ENCODE measurements at regions of chr16 and their contacts with region 1.

Region 1: DNA sequence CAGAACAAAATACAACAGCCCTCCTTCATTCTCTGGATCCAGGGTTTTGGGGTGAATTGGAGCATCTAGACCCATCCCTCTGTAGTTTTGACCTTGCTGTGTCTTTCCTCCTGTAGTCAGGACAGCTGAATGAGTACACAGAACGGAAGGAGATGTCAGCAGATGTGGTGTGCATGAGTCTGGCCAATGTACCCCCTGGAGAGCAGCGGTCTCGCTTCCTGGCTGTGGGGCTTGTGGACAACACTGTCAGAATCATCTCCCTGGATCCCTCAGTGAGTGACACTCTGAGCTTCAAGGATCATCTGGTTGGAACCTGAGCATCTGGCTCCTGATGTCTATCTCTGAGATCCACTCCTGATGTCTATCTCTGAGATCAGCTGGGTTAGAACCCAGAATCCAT is 32.4 kb downstream of the SF3B3 start:
- DNase-seq: no peak
- H3K4me3 Mint-ChIP-seq: no peak overlapping the region
- H3K27ac Mint-ChIP-seq: no peak overlapping the region
- H3K4me1 Mint-ChIP-seq: no peaks in the 10 kb centered on the region
- H3K27me3 Mint-ChIP-seq: no peaks in the 10 kb centered on the region

Region 2: GRCh38 chr16:70529051-70529777 is 26.8 kb before region 1 on chr16:
- intact Hi-C with region 1: loop called (anchors 2 kb)
- DNase-seq: no peak
- H3K4me3 Mint-ChIP-seq: peak overlapping the region; percentile 48
- H3K27ac Mint-ChIP-seq: peak overlapping the region; percentile 58
- H3K4me1 Mint-ChIP-seq: peaks cover 57% of the 10 kb centered on the region
- H3K27me3 Mint-ChIP-seq: no peaks in the 10 kb centered on the region

Measured in activated T-helper 1 cell treated with anti-CD3 and anti-CD28 coated beads, Interleukin-12 subunit alpha, Interleukin-12 subunit beta, Interleukin-2, Interleukin-4 antibody, amounts not matched to agents 30 ng/mL and 10 ng/mL and 1 ng/mL, durations not matched to agents 14 hours and 24 hours and 36 hours (primary cell).